Lower lobe of right lung (tissue), 2 donors: ENCODE measurements at regions of chr6 and their contacts with region 1.

Region 1: GRCh38 chr6:29016559-29017427 is 11.7 kb upstream of the ZNF311 start:
- DNase-seq: peak; percentile 81
- ATAC-seq: peak; percentile 93 to 96
- H3K4me3 ChIP-seq: peak overlapping the region; percentile 60
- H3K27ac ChIP-seq: no peak overlapping the region
- H3K4me1 ChIP-seq: peaks cover 12% of the 10 kb centered on the region
- H3K27me3 ChIP-seq: peaks cover 38% of the 10 kb centered on the region
- CTCF ChIP-seq: peak; percentile 86

Region 2: DNA sequence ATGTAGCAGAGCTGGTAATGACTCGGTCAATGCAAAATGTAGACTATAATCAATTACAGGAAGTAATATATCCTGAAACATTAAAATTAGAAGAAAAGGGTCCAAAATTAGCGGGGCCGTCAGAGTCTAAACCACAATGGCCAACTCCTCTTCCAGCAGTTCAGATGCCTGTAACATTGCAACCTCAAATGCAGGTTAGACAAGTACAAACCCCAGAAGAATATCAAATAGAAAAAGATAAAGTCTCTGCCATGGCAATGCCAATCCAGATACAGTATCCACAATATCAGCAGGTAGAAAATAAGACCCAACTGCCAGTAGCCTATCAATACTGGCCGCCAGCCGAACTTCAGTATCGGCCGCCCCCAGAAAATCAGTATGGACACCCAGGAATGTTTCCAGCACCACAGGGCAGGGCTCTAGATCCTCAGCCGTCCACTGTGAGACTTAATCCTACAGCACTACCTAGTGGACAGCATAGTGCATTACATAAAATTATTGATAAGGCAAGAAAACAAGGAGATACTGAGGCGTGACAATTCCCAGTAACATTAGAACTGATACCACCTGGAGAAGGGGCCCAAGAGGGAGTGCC is 332.8 kb before region 1 on chr6:
- intact Hi-C with region 1: loop called (anchors 10 kb)
- DNase-seq: no peak
- ATAC-seq: peak; percentile 56 to 70
- H3K4me3 ChIP-seq: no peak overlapping the region
- H3K27ac ChIP-seq: no peak overlapping the region
- H3K4me1 ChIP-seq: no peaks in the 10 kb centered on the region
- H3K27me3 ChIP-seq: peaks cover 73% of the 10 kb centered on the region
- CTCF ChIP-seq: peak; percentile 53

Region 3: GRCh38 chr6:28838634-28839442 is 178.0 kb before region 1 on chr6:
- intact Hi-C with region 1: loop called (anchors 5 kb)
- DNase-seq: peak; percentile 87
- ATAC-seq: peak; percentile 92 to 94
- H3K4me3 ChIP-seq: peak overlapping the region; percentile 74
- H3K27ac ChIP-seq: peak overlapping the region; percentile 74
- H3K4me1 ChIP-seq: peaks cover 9% of the 10 kb centered on the region
- H3K27me3 ChIP-seq: peaks cover 30% of the 10 kb centered on the region
- CTCF ChIP-seq: peak; percentile 63